Uterus (tissue), 4 donors: ENCODE measurements at regions of chr22 and their contacts with region 1.

Region 1: DNA sequence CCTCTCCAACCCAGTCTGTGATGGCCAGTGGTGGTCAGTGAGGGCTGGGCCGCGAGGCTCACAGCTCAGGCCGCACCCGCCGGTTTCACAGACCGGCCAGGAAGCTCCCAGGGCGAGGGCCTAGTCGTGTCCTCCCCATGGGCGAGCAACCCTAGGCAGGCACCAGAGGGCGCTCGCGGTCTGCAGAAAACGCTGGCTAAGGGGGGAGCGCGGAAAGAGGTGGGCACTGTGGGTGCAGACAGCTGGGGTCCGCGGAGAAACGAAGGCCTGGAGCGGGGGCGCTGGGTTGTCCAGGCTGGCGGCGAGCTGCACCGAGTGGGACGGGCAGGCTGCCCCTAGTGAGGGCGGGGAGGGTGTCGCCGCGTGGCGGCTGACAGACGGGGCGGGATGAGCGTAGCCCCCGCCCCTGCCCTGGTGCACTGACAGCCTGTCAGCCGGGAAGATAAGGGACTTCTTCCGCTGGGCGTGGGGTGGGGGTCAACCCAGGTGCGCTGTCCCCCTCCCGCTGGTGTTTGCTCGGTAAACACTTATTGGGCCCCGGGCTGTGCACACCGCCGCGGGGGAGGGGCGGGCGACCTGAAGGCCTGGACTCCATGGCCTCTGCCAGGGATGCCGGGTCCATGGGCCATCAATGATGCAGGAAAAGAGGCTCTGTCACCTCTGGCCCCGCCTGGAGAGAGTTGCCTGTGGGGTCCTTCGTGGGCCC is 7.5 kb downstream of the GP1BB start:
- DNase-seq: peak; percentile 81 to 87
- H3K4me3 ChIP-seq: peak overlapping the region in 1 of 2 donors; percentile 21
- H3K27ac ChIP-seq: no peak overlapping the region
- H3K4me1 ChIP-seq: no peaks in the 10 kb centered on the region
- H3K27me3 ChIP-seq: no peaks in the 10 kb centered on the region
- CTCF ChIP-seq: peak; percentile 93 to 99 (median 96)
- POLR2A ChIP-seq: peak in 1 of 2 donors; percentile 36

Region 2: GRCh38 chr22:19896665-19897355 is 166.0 kb after region 1 on chr22:
- intact Hi-C with region 1: no loop called
- DNase-seq: no peak
- H3K4me3 ChIP-seq: no peak overlapping the region
- H3K27ac ChIP-seq: no peak overlapping the region
- H3K4me1 ChIP-seq: peaks cover 4 to 8% of the 10 kb centered on the region in 2 donors
- H3K27me3 ChIP-seq: no peaks in the 10 kb centered on the region
- CTCF ChIP-seq: no peak
- POLR2A ChIP-seq: no peak

Region 3: GRCh38 chr22:19909350-19910179 is 178.8 kb after region 1 on chr22:
- intact Hi-C with region 1: loop called (anchors 2 kb)
- DNase-seq: peak; percentile 84 to 87
- H3K4me3 ChIP-seq: no peak overlapping the region
- H3K27ac ChIP-seq: no peak overlapping the region
- H3K4me1 ChIP-seq: no peaks in the 10 kb centered on the region
- H3K27me3 ChIP-seq: no peaks in the 10 kb centered on the region
- CTCF ChIP-seq: peak; percentile 87 to 97 (median 92)
- POLR2A ChIP-seq: no peak